ENCODE measurements at regions of chr2 and their contacts with region 1.

Region 1: DNA sequence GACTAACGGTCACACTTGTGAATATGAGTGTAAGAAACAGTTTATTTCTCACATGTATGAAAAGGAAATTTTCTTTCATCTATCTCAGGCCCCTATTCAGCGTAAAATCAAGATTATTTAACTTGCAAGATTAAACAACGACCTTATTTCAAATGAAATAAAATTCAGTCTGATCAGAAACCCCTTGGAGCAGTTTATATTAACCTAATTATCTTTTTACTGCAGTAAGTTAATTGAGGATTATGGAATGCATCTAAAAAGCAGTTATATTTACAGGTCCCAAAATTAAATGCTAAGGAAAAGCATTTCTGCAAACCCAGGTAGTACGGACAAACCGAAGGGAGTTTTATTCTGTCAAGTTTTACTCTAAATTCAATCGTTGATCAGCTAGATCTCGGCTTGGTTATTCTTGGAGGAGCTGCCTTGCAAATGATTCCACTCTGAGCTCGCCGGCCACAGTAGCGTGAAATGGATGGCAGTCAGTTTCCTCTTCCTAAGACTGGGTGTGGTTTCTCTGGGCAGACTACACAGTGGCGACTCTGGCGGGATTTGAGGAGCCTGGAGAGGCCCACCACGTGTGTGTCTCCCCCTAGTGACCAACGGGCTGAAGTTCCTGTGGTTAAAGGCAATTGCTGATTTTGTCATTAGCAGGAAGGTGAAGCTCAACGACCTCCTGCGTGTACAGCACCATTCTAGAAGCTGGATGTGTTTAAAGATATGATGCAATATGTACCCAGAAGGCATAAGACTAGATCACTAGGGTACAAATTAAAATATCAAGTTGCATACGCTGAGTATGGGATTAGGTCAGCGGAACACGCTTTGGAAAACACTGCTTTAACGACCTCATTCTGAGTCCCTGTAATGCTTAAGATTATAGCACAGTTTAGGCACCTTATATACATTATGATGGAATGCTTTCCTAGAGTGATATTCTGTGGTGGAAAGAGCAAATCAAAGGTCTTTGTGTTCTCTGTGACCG is 36.4 kb downstream of the PRKRA start:
- DNase-seq: peak; percentile 90
- ATAC-seq: peak; percentile 80
- H3K4me3 Mint-ChIP-seq: peak overlapping the region; percentile 79
- H3K27ac Mint-ChIP-seq: peak overlapping the region; percentile 89
- H3K4me1 Mint-ChIP-seq: peaks cover 30% of the 10 kb centered on the region
- H3K27me3 Mint-ChIP-seq: peaks cover 4% of the 10 kb centered on the region

Region 2: GRCh38 chr2:178306352-178307073 is 108.0 kb before region 1 on chr2:
- CTCF ChIA-PET with region 1: interaction called, 16 read pairs
- POLR2A ChIA-PET with region 1: no interaction called
- DNase-seq: peak; percentile 52
- ATAC-seq: peak; percentile 49
- H3K4me3 Mint-ChIP-seq: no peak overlapping the region
- H3K27ac Mint-ChIP-seq: no peak overlapping the region
- H3K4me1 Mint-ChIP-seq: no peaks in the 10 kb centered on the region
- H3K27me3 Mint-ChIP-seq: peaks cover 14% of the 10 kb centered on the region

Region 3: GRCh38 chr2:178335230-178335629 is 79.3 kb before region 1 on chr2:
- CTCF ChIA-PET with region 1: no interaction called
- POLR2A ChIA-PET with region 1: no interaction called
- DNase-seq: no peak
- ATAC-seq: no peak
- H3K4me3 Mint-ChIP-seq: no peak overlapping the region
- H3K27ac Mint-ChIP-seq: no peak overlapping the region
- H3K4me1 Mint-ChIP-seq: no peaks in the 10 kb centered on the region
- H3K27me3 Mint-ChIP-seq: peaks cover 9% of the 10 kb centered on the region

Region 4: DNA sequence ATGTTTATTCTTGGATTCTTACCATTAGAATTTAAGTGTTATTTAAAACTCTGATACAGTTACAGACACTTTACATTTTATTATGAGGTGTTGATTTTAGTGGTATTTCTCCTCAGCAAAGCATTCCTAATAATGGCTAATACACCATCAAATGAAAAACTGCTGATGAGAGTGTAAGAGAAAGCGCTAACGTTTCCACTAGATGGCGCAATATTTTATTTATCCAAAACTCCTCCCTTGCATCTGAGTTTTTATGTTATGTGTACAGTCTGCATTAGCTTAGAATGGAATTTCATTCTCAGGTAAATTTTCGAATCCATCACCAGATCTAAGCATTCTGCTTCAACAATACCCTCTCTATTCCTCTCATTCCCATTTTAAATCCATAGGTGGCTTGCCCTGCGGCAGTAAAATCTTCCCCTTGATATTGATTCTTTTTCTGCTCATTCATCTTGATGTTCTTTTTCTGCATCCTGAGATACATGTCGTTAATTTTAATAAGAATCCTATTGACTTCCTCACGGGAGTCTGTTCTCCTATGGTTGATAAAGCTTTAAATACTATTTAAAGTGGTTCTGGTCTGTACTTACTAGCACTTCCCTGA is 17.5 kb before region 1 on chr2:
- CTCF ChIA-PET with region 1: interaction called, 179 read pairs
- POLR2A ChIA-PET with region 1: interaction called, 13 read pairs
- DNase-seq: no peak
- ATAC-seq: peak; percentile 79
- H3K4me3 Mint-ChIP-seq: no peak overlapping the region
- H3K27ac Mint-ChIP-seq: no peak overlapping the region
- H3K4me1 Mint-ChIP-seq: peaks cover 4% of the 10 kb centered on the region
- H3K27me3 Mint-ChIP-seq: peaks cover 34% of the 10 kb centered on the region

Region 5: GRCh38 chr2:178426388-178426787 is 11.8 kb after region 1 on chr2:
- CTCF ChIA-PET with region 1: interaction called, 16 read pairs
- POLR2A ChIA-PET with region 1: interaction called, 4 read pairs
- DNase-seq: no peak
- ATAC-seq: no peak
- H3K4me3 Mint-ChIP-seq: no peak overlapping the region
- H3K27ac Mint-ChIP-seq: no peak overlapping the region
- H3K4me1 Mint-ChIP-seq: peaks cover 2% of the 10 kb centered on the region
- H3K27me3 Mint-ChIP-seq: no peaks in the 10 kb centered on the region

Region 6: DNA sequence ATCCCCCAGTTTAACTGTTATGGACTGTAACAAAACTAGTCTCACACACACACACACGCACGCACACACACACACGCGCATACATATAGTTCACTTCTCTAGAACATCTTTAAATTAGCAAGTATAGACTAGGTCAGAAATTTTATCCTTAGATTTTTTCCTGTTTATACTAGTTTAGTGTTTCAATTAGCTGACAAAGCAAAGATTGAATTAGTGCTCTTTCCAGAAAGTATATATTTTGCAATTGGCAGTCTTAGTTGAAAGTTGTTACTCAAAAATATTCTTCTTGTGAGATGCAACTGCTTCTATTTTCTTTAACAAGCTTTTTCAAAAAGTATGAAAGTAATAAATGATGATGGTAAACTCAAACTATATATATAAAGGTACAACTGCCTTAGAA is 88.2 kb after region 1 on chr2:
- CTCF ChIA-PET with region 1: no interaction called
- POLR2A ChIA-PET with region 1: no interaction called
- DNase-seq: no peak
- ATAC-seq: no peak
- H3K4me3 Mint-ChIP-seq: no peak overlapping the region
- H3K27ac Mint-ChIP-seq: no peak overlapping the region
- H3K4me1 Mint-ChIP-seq: peaks cover 2% of the 10 kb centered on the region
- H3K27me3 Mint-ChIP-seq: no peaks in the 10 kb centered on the region

Region 7: GRCh38 chr2:178602901-178603300 is 188.3 kb after region 1 on chr2:
- CTCF ChIA-PET with region 1: no interaction called
- POLR2A ChIA-PET with region 1: no interaction called
- DNase-seq: no peak
- ATAC-seq: no peak
- H3K4me3 Mint-ChIP-seq: no peak overlapping the region
- H3K27ac Mint-ChIP-seq: no peak overlapping the region
- H3K4me1 Mint-ChIP-seq: no peaks in the 10 kb centered on the region
- H3K27me3 Mint-ChIP-seq: no peaks in the 10 kb centered on the region

Measured in activated CD8-positive, alpha-beta T cell treated with anti-CD3 and anti-CD28 coated beads, Interleukin-2, amount 10 ng/mL, durations not matched to agents 7 days and 5 days (primary cell).